HEK293 (cell line): ENCODE measurements at regions of chr17 and their contacts with region 1.

Region 1: GRCh38 chr17:57995076-57995956 is 7.3 kb upstream of the VEZF1 start:
- H3K4me3 ChIP-seq: no peak overlapping the region
- H3K27ac ChIP-seq: no peak overlapping the region
- H3K4me1 ChIP-seq: peaks cover 3% of the 10 kb centered on the region; the same call in 1 of the 2 replicates
- CTCF ChIP-seq: peak; percentile 55

Region 2: GRCh38 chr17:57833179-57833939 is 162.0 kb before region 1 on chr17:
- CTCF ChIA-PET with region 1: interaction called, 17 read pairs
- POLR2A ChIA-PET with region 1: interaction called, 4 read pairs
- H3K4me3 ChIP-seq: no peak overlapping the region
- H3K27ac ChIP-seq: peak overlapping the region; percentile 4; the same call in 1 of the 2 replicates
- H3K4me1 ChIP-seq: no peaks in the 10 kb centered on the region; the same call in 1 of the 2 replicates
- CTCF ChIP-seq: peak; percentile 92

Region 3: GRCh38 chr17:57861000-57861789 is 134.1 kb before region 1 on chr17:
- CTCF ChIA-PET with region 1: interaction called, 434 read pairs
- POLR2A ChIA-PET with region 1: interaction called, 49 read pairs
- H3K4me3 ChIP-seq: no peak overlapping the region
- H3K27ac ChIP-seq: peak overlapping the region; percentile 38; the same call in 1 of the 2 replicates
- H3K4me1 ChIP-seq: peaks cover 4% of the 10 kb centered on the region; the same call in 1 of the 2 replicates
- CTCF ChIP-seq: no peak

Region 4: DNA sequence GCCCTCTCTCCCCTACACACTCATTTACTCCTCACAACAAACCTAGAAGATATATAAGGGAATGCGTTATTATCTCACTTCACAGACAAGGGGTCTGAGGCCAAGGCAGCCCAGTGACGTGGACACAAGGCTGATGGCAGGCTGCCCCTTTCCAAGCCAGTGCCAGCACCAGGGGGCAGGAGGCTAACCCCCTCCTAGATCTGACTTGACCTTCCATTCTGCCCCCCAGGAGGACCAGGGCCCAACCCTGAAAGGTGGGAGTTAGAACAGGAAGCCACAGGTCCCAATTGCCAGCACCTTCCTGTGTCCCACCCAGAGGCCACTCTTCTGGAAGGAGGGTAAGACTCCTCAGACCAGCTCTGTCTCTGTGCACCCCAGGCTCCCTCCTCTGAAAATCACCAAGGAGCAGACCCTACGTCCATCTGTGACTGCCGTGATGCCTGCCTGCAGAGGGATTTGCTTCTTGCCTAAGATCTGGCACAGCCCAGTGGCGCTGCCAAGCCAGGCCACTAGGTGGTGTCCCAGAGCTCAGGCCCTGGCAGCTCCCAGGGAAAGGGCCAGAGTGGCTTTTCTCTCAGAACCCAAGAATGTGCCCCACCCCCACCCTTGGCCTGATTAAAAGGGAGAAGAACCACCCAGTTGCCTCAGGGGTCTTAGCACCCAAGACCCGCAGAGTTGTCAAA is 103.0 kb before region 1 on chr17:
- CTCF ChIA-PET with region 1: interaction called, 36 read pairs
- POLR2A ChIA-PET with region 1: interaction called, 10 read pairs
- H3K4me3 ChIP-seq: no peak overlapping the region
- H3K27ac ChIP-seq: no peak overlapping the region
- H3K4me1 ChIP-seq: peaks cover 6% of the 10 kb centered on the region
- CTCF ChIP-seq: peak; percentile 92

Region 5: GRCh38 chr17:57940653-57941329 is 54.5 kb before region 1 on chr17:
- CTCF ChIA-PET with region 1: no interaction called
- POLR2A ChIA-PET with region 1: no interaction called
- H3K4me3 ChIP-seq: no peak overlapping the region
- H3K27ac ChIP-seq: peak overlapping the region; percentile 44; the same call in 1 of the 2 replicates
- H3K4me1 ChIP-seq: peaks cover 46% of the 10 kb centered on the region
- CTCF ChIP-seq: no peak

Region 6: DNA sequence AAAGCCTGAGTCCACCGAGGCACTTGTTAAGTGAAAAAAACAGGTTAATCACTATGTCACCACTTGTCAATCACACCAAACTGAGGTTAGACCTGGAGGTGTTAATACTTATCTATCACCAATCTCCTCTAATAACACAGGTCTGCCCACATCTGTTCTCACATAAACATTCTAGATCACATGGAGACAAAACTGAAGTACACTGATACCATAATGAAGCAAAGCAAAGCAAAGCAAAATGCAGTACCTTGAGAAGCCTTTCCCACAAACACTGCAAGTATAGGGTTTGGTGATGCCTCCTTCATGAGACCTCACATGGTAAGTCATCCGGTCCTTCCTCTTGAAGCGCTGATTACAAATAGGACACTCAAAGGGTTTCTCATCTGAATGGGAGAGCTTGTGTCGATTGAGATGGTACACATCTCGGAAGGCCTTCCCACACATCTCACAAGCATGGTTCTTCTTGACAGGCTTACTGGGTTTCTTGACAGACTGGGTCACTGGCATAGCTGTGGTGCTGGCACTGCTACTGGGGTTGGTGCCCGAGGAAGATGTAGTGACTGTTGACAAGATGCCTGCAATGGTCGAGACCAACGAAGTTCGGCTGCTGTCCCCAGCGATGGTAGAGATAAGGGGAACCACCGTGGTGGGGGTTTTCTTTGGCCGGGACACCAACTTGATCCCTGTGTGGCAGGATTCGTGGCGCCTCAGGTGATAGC is 12.7 kb before region 1 on chr17:
- CTCF ChIA-PET with region 1: interaction called, 26 read pairs
- POLR2A ChIA-PET with region 1: interaction called, 7 read pairs
- H3K4me3 ChIP-seq: no peak overlapping the region
- H3K27ac ChIP-seq: no peak overlapping the region
- H3K4me1 ChIP-seq: peaks cover 26% of the 10 kb centered on the region
- CTCF ChIP-seq: no peak

Region 7: DNA sequence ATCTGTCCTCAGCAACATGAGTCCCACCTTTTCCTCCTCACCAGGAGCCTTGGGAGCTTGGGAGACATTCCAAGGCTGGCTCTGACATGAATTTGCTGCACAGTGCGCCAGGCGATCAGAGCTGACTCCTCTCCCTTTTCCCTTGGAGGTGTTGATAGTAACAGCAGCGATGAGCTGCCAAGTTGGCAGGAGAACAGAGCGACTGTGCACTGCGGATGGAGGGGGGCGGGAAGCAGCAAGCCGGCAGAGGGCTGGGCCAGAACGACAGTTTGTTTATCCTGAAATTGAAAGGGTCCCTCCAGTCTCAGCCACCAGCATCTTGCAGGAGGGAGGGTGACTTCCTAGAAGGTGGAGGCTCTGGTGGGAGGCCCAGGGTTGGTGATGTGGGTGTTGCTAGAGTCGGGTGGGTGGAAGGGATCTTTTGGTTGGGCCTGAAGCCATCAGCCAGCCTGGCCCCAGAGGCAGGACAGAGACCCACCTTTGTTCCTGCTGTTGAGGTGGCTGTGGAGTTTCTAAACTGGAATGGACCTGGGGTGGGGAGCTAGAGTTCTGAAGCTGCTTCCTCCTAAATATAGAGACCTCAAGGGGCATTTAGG is 65.4 kb after region 1 on chr17:
- CTCF ChIA-PET with region 1: interaction called, 12 read pairs
- POLR2A ChIA-PET with region 1: no interaction called
- H3K4me3 ChIP-seq: no peak overlapping the region
- H3K27ac ChIP-seq: no peak overlapping the region
- H3K4me1 ChIP-seq: no peaks in the 10 kb centered on the region
- CTCF ChIP-seq: no peak

Region 8: DNA sequence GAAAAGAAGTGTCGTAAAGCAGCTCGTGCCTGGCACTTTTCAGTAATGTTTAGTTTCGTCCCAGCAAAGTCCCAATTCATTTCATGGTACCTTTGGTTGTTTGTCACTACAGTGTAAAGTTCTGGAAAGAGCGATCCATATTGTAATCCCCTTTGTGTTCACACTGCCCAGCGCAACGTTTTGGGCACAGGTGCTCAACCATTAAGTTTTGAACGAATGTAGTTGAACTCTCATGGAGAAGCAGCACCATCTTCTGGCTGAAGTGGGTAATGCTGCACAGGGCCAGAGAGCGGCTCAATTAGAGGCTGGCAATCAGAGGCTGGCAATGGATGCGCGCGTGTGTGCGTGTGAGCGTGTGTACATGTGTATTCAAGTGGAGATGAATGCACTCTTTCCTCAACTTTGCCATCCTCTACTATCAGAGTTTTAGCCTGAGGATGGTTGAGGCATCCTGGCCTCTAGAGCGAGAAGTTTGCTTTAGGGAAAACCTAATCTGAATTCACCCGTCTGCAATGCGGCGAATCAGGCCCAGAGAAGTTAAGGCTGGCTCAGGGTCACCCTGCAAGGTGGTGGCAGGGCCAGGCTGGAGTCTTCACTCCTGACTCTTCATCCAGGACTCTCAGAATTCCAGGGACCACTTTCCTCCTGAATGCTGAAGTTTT is 117.8 kb after region 1 on chr17:
- CTCF ChIA-PET with region 1: interaction called, 20 read pairs
- POLR2A ChIA-PET with region 1: no interaction called
- H3K4me3 ChIP-seq: no peak overlapping the region
- H3K27ac ChIP-seq: no peak overlapping the region
- H3K4me1 ChIP-seq: no peaks in the 10 kb centered on the region
- CTCF ChIP-seq: peak; percentile 92

Region 9: DNA sequence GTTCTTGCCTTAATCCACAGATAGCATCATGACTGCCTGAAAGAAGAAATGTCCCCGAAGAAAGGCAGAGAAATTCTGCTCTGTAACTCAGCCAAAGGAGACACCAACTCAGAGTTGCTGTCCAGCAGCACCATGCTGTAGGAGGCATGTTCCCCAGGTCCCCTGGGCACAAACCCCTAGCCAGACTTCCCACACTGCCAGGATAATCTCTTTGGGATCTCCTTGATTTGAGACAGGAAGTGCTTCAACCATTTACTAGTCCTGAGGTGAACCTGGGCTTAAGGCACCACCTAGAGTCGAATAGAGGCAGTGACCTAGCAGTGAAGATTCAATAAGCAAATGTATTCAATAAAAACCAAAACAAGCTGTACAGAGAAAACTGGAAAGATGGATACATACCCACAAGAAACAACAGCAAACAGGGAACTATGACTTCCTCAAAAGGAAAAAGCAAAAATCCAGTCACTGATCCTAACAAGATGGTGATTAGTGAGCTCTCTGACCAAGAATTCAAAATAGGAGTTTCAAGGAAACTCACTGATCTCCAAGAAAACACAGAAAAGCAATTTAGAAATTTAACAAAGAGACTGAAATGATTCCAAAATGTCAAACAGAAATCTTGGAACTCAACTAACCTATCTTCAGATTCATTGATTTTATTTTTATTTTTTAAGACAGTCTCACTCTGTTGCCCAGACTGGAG is 177.2 kb after region 1 on chr17:
- CTCF ChIA-PET with region 1: no interaction called
- POLR2A ChIA-PET with region 1: no interaction called
- H3K4me3 ChIP-seq: no peak overlapping the region
- H3K27ac ChIP-seq: no peak overlapping the region
- H3K4me1 ChIP-seq: no peaks in the 10 kb centered on the region
- CTCF ChIP-seq: no peak